ENCODE measurements at regions of chr5 and their contacts with region 1.

Region 1: GRCh38 chr5:26847014-26847596 is 191.3 kb downstream of the CDH9 start:
- DNase-seq: no peak
- H3K4me3 ChIP-seq: no peak overlapping the region
- CTCF ChIP-seq: no peak
- POLR2A ChIP-seq: no peak

Region 2: DNA sequence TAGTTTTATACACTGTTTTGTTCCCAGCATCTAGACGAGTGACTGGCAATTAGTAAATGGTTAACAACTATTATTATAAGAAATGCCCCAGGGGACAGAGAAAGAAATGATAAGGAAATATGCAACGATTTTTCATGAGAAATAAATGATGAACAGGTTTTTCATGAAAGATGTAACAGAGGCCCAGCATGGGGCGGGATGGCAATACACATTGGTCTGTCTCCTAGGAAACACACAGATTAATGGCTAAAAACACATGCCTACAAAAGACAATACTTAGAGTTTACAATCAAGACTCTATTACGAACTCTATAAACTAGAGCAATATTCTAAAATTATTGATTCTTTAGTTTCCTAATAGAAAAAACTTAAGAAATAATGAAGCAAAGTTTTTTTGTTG is 632.8 kb after region 1 on chr5:
- intact Hi-C with region 1: loop called (anchors 5 kb)
- DNase-seq: no peak
- H3K4me3 ChIP-seq: no peak overlapping the region
- CTCF ChIP-seq: no peak
- POLR2A ChIP-seq: no peak

Region 3: DNA sequence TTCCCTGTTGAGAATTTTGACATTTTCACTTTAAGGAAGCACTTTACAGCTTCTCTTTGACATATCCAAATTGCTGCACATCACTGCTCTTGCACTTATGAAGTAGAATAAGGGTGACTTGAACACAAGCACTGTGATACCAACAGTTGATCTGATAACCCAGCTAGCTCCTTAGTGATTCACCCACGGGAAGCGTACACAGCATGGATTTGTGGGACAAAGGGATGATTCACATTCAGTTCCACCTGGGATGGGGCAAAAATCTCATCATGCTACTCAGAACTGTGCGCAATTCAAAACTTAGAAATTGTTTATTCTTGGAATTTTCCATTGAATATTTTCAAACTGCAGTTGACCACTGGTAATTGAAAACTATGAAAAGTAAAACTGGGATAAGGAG is 1756.8 kb after region 1 on chr5:
- intact Hi-C with region 1: no loop called
- DNase-seq: no peak
- H3K4me3 ChIP-seq: no peak overlapping the region
- CTCF ChIP-seq: no peak
- POLR2A ChIP-seq: no peak

Measured in lower leg skin (tissue), 4 donors.